CD8-positive, alpha-beta memory T cell (primary cell): ENCODE measurements at regions of chr15 and their contacts with region 1.

Region 1: DNA sequence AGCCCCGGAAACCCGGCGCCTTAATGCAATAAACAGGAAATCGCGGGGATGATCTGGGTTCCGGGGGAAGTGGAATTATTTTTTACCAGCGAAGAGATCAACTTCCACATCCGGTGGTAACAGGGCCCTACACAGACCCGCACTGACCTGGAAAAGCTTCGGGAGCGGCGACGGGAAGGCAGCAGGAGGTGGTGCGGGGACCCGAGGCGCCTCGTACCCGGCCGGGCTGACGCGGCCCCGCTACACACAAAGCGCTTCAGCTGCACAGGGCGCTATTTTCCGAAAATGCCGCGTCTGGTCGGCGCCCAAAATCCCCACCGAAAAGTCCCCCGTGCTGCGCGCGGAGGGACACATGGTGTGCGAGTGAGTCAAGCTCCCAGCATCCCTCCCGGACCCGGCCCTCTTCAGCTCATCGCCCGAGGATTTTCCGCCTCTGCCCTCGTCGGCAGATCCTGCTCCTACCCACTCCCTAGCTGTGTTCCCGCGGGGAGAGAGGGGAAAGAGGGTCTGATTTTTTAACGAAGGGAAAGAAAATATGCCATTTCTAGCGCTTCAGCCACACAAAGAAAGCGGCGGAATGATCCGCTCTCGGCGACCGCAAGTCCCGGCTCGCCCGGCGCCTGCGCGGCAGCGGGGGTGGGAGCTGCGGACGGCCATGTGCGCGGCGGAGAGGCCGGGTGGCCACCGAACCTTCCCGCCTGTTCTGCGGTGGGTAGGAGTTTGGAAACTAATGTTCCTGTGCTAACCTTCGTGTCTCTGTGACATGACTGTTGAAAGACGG is at the start of gene GABPB1:
- DNase-seq: peak; percentile 79 to 93 (median 91)
- H3K4me3 ChIP-seq: peak within 1 kb of the TSS; percentile 62
- H3K4me3 Mint-ChIP-seq: peak within 1 kb of the TSS; percentile 94 to 98 (median 97)
- H3K27ac ChIP-seq: peak within 1 kb of the TSS; percentile 88
- H3K27ac Mint-ChIP-seq: peak within 1 kb of the TSS; percentile 98 to 100 (median 99)
- H3K4me1 ChIP-seq: peaks cover 45% of the 10 kb centered on the region
- H3K4me1 Mint-ChIP-seq: peaks cover 51 to 69% (median 68%) of the 10 kb centered on the region in 3 donors
- H3K27me3 ChIP-seq: no peaks in the 10 kb centered on the region
- H3K27me3 Mint-ChIP-seq: peaks cover 0 to 10% of the 10 kb centered on the region in 2 donors
- total RNA-seq, gene GABPB1: 45.7 to 46.5 TPM

Region 2: GRCh38 chr15:48877630-48878595 is 1477.1 kb before region 1 on chr15 and contains the start of gene EID1:
- CTCF ChIA-PET with region 1: no interaction called
- POLR2A ChIA-PET with region 1: interaction called, 10 read pairs
- DNase-seq: peak; percentile 89 to 94 (median 92)
- H3K4me3 ChIP-seq: peak within 1 kb of the TSS; percentile 88
- H3K4me3 Mint-ChIP-seq: peak within 1 kb of the TSS; percentile 96 to 100 (median 99)
- H3K27ac ChIP-seq: peak within 1 kb of the TSS; percentile 84
- H3K27ac Mint-ChIP-seq: peak within 1 kb of the TSS; percentile 92 to 100 (median 98)
- H3K4me1 ChIP-seq: peaks cover 13% of the 10 kb centered on the region
- H3K4me1 Mint-ChIP-seq: peaks cover 24 to 33% (median 32%) of the 10 kb centered on the region in 3 donors
- H3K27me3 ChIP-seq: no peaks in the 10 kb centered on the region
- H3K27me3 Mint-ChIP-seq: peaks cover 13 to 14% of the 10 kb centered on the region in 2 donors
- total RNA-seq, gene EID1: 113 to 125 TPM

Region 3: GRCh38 chr15:50390554-50391287 is 35.7 kb after region 1 on chr15:
- CTCF ChIA-PET with region 1: no interaction called
- POLR2A ChIA-PET with region 1: no interaction called
- DNase-seq: no peak
- H3K4me3 ChIP-seq: no peak overlapping the region
- H3K4me3 Mint-ChIP-seq: no peak overlapping the region
- H3K27ac ChIP-seq: no peak overlapping the region
- H3K27ac Mint-ChIP-seq: peak overlapping the region in 1 of 8 donors; percentile 10
- H3K4me1 ChIP-seq: no peaks in the 10 kb centered on the region
- H3K4me1 Mint-ChIP-seq: no peaks in the 10 kb centered on the region
- H3K27me3 ChIP-seq: no peaks in the 10 kb centered on the region
- H3K27me3 Mint-ChIP-seq: no peaks in the 10 kb centered on the region

Region 4: DNA sequence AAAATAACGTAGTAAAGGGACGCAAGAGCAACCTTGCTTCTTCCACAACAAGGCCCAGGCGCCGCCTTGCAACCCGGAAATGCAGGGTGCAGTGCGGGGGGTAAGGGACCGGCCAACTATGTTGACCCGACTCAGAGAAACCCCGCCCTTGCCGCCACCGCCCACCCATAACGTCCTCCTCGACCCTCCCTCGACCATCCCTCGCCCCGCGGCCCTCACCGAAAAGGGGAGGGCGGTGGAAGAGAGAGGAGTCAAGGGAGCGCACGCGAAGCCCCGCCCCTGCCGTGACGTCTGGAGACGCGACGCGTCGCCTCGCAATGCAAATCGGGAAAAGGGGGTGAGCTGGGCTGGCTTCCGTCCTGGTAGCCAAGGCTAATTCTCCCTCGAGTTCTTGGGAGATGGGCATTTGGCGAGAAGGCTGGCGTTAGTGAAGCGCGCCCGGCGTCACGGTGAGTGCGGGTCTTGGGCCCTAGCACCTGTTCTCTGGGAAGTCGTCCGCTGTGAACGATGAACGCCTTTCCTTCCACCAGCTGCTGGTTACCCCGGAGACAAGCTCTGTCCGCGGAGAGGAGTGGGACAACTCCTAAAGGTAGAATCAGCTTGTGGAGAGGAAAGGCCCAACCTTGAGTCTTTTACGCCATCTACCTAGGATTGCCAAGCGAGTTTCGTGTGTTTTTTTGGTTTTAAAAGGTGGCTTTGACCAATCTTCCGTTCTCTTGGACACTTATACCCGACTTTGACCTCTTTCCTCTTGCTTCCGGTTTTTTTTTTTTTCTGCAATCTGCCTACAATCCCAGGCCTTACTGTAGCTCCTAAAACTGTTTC is 69.2 kb after region 1 on chr15 and contains the start of gene USP8:
- CTCF ChIA-PET with region 1: interaction called, 3 read pairs
- POLR2A ChIA-PET with region 1: interaction called, 44 read pairs
- DNase-seq: peak; percentile 87 to 94 (median 91)
- H3K4me3 ChIP-seq: peak within 1 kb of the TSS; percentile 89
- H3K4me3 Mint-ChIP-seq: peak within 1 kb of the TSS; percentile 89 to 99 (median 96)
- H3K27ac ChIP-seq: peak within 1 kb of the TSS; percentile 94
- H3K27ac Mint-ChIP-seq: peak within 1 kb of the TSS; percentile 95 to 99 (median 98)
- H3K4me1 ChIP-seq: peaks cover 27% of the 10 kb centered on the region
- H3K4me1 Mint-ChIP-seq: peaks cover 25 to 55% (median 32%) of the 10 kb centered on the region in 3 donors
- H3K27me3 ChIP-seq: no peaks in the 10 kb centered on the region
- H3K27me3 Mint-ChIP-seq: no peaks in the 10 kb centered on the region
- total RNA-seq, gene USP8: 54.0 to 59.8 TPM